ENCODE measurements at regions of chr1 and their contacts with region 1.

Region 1: DNA sequence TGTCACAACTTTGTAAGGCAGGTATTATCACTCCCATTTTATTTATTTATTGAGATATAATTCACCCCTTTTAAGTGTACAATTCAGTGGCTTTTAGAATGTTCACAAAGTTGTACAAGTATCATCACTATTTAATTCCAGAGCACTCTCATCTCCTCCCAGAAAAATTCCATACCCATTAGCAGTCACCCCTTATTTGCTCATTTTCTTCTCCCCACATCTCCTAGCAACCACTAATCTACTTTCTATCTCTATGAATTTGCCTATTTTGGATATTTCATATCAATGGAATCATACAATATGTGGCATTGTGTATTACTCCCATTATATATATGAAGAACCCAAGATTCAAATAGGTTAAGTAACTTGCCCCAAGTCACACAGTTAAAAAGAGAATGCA is 7.0 kb downstream of the DSTYK start:
- DNase-seq: no peak
- ATAC-seq: no peak
- H3K4me3 Mint-ChIP-seq: peak overlapping the region; percentile 0
- H3K27ac Mint-ChIP-seq: peak overlapping the region; percentile 85
- H3K4me1 Mint-ChIP-seq: peaks cover 74% of the 10 kb centered on the region
- H3K27me3 Mint-ChIP-seq: no peaks in the 10 kb centered on the region

Region 2: DNA sequence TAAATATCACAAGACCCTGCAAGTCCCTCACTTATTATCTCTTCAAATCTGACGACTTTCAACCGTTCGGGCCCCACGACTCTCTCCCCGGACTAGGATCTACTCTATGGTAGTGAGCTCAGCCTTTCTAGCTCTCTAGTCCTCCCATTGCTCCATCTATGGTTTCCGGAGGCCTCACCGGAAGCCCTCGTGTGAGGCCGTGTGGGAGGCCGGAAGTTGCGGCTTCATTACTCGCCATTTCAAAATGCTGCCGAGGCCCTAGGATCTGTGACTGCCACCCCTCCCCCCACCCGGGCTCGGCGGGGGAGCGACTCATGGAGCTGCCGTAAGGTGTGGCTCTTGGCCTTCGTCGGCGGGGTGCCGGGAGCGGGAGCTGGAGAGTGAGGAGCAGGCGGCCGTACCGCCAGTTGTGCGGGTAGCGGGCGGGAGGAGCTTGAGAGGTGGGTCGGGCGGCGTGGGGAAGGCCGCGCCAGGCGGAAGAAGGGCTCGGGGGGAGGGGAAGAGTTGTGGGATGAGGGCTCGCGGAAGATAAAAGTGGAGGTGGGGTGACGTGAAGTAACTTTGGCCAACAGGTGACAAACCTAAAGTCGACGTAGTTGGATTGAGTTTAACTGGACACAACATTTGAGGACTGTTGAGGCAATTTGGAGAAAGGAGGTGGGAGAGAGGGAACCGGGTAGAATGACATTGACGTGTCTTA is 688.2 kb before region 1 on chr1 and contains the start of gene MDM4:
- CTCF ChIA-PET with region 1: no interaction called
- POLR2A ChIA-PET with region 1: interaction called, 4 read pairs
- intact Hi-C with region 1: loop called in 1 of 2 experiments (anchors 10 kb)
- DNase-seq: peak; percentile 98
- ATAC-seq: peak; percentile 85
- H3K4me3 Mint-ChIP-seq: no peak within 1 kb of the TSS
- H3K27ac Mint-ChIP-seq: no peak within 1 kb of the TSS
- H3K4me1 Mint-ChIP-seq: peaks cover 62% of the 10 kb centered on the region
- H3K27me3 Mint-ChIP-seq: no peaks in the 10 kb centered on the region
- total RNA-seq, gene MDM4: 89.1 to 94.6 TPM

Region 3: DNA sequence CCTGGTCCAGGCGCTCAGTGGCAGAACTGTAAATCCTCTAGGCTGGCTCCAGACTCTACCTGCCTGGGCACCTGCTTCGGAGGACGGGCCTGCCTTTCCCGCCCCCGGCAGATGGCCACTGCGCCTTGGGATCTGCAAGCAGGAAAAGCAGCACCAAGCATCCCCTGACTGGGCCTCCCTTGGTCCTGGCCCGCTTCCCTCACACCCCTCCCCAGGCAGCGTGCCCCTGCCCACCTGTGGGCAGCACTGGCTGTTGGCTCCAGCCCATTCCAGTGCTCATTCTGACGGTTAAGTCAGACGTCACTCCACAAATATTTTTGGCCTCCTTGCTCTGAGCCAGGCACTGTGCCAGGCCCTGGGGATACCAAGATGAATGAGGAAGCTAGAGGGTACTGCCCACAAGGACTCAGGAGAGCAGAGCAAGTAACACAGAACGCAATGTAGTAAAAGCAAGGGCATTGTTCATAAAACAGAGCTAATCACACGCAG is 273.3 kb after region 1 on chr1:
- CTCF ChIA-PET with region 1: no interaction called
- POLR2A ChIA-PET with region 1: no interaction called
- intact Hi-C with region 1: no loop called
- DNase-seq: no peak
- ATAC-seq: no peak
- H3K4me3 Mint-ChIP-seq: no peak overlapping the region
- H3K27ac Mint-ChIP-seq: no peak overlapping the region
- H3K4me1 Mint-ChIP-seq: peaks cover 21% of the 10 kb centered on the region
- H3K27me3 Mint-ChIP-seq: peaks cover 50% of the 10 kb centered on the region

Measured in activated CD4-positive, alpha-beta T cell treated with anti-CD3 and anti-CD28 coated beads for 36 hours (primary cell).